H1 (cell line): ENCODE measurements at regions of chr9 and their contacts with region 1.

Region 1: GRCh38 chr9:6827439-6827838 is 69.7 kb downstream of the KDM4C start:
- DNase-seq: peak in 1 of 2 experiments; percentile 63
- H3K4me3 ChIP-seq: no peak overlapping the region
- H3K27ac ChIP-seq: no peak overlapping the region
- H3K4me1 ChIP-seq: no peaks in the 10 kb centered on the region
- H3K27me3 ChIP-seq: no peaks in the 10 kb centered on the region
- CTCF ChIP-seq: peak in 2 of 3 experiments; percentile 62 to 65; a peak in 2 of 4 replicates
- EP300 ChIP-seq: no peak
- POLR2A ChIP-seq: no peak
- RAD21 ChIP-seq: peak; percentile 91

Region 2: GRCh38 chr9:6566409-6567139 is 260.9 kb before region 1 on chr9:
- CTCF ChIA-PET with region 1: no interaction called
- POLR2A ChIA-PET with region 1: no interaction called
- DNase-seq: peak in 1 of 2 experiments; percentile 2
- H3K4me3 ChIP-seq: no peak overlapping the region
- H3K27ac ChIP-seq: no peak overlapping the region
- H3K4me1 ChIP-seq: no peaks in the 10 kb centered on the region
- H3K27me3 ChIP-seq: no peaks in the 10 kb centered on the region
- CTCF ChIP-seq: no peak
- EP300 ChIP-seq: no peak
- POLR2A ChIP-seq: no peak
- RAD21 ChIP-seq: no peak

Region 3: DNA sequence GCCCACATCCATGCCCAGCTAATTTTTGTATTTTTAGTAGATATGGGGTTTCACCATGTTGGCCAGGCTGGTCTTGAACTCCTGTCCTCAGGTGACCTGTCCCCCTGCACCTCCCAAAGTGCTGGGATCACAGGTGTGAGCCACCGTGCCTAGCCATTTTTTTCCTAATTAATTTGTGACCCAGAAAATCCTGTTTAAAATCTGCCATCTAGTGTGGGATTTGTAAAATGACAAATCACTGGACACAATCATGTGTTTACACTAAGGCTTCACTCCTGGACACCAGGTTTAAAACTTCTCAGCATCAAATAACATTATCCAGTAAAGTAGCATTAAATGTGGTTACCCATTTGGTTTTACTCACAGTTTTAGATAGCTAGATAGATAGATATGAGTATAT is 88.2 kb before region 1 on chr9:
- CTCF ChIA-PET with region 1: interaction called, 10 read pairs
- POLR2A ChIA-PET with region 1: no interaction called
- DNase-seq: no peak
- H3K4me3 ChIP-seq: no peak overlapping the region
- H3K27ac ChIP-seq: no peak overlapping the region
- H3K4me1 ChIP-seq: no peaks in the 10 kb centered on the region
- H3K27me3 ChIP-seq: no peaks in the 10 kb centered on the region
- CTCF ChIP-seq: no peak
- EP300 ChIP-seq: no peak
- POLR2A ChIP-seq: no peak
- RAD21 ChIP-seq: peak; percentile 47 to 52

Region 4: GRCh38 chr9:6771722-6772121 is 55.7 kb before region 1 on chr9:
- CTCF ChIA-PET with region 1: no interaction called
- POLR2A ChIA-PET with region 1: no interaction called
- DNase-seq: peak; percentile 69 to 85
- H3K4me3 ChIP-seq: no peak overlapping the region
- H3K27ac ChIP-seq: peak overlapping the region; percentile 9; the same call in 1 of the 2 replicates
- H3K4me1 ChIP-seq: peaks cover 3 to 15% (median 6%) of the 10 kb centered on the region in 4 experiments; a peak in 5 of 7 replicates
- H3K27me3 ChIP-seq: no peaks in the 10 kb centered on the region
- CTCF ChIP-seq: no peak
- EP300 ChIP-seq: peak; percentile 16 to 84; a peak in 2 of 3 replicates
- POLR2A ChIP-seq: no peak
- RAD21 ChIP-seq: no peak; a peak in 1 of 4 replicates

Region 5: GRCh38 chr9:6811436-6811835 is 16.0 kb before region 1 on chr9:
- CTCF ChIA-PET with region 1: interaction called, 13 read pairs
- POLR2A ChIA-PET with region 1: no interaction called
- DNase-seq: no peak
- H3K4me3 ChIP-seq: no peak overlapping the region
- H3K27ac ChIP-seq: no peak overlapping the region
- H3K4me1 ChIP-seq: no peaks in the 10 kb centered on the region
- H3K27me3 ChIP-seq: no peaks in the 10 kb centered on the region
- CTCF ChIP-seq: no peak
- EP300 ChIP-seq: no peak
- POLR2A ChIP-seq: no peak
- RAD21 ChIP-seq: no peak

Region 6: GRCh38 chr9:6845880-6846279 is 18.4 kb after region 1 on chr9:
- CTCF ChIA-PET with region 1: interaction called, 120 read pairs
- POLR2A ChIA-PET with region 1: interaction called, 3 read pairs
- DNase-seq: peak in 1 of 2 experiments; percentile 9
- H3K4me3 ChIP-seq: no peak overlapping the region
- H3K27ac ChIP-seq: no peak overlapping the region
- H3K4me1 ChIP-seq: peaks cover 0 to 6% (median 3%) of the 10 kb centered on the region in 4 experiments; a peak in 3 of 7 replicates
- H3K27me3 ChIP-seq: no peaks in the 10 kb centered on the region
- CTCF ChIP-seq: peak; percentile 53 to 87 (median 56)
- EP300 ChIP-seq: no peak
- POLR2A ChIP-seq: no peak
- RAD21 ChIP-seq: peak; percentile 71 to 74

Region 7: GRCh38 chr9:6873857-6874256 is 46.4 kb after region 1 on chr9:
- CTCF ChIA-PET with region 1: interaction called, 11 read pairs
- POLR2A ChIA-PET with region 1: interaction called, 4 read pairs
- DNase-seq: no peak
- H3K4me3 ChIP-seq: no peak overlapping the region
- H3K27ac ChIP-seq: no peak overlapping the region
- H3K4me1 ChIP-seq: peaks cover 3 to 14% (median 10%) of the 10 kb centered on the region in 4 experiments
- H3K27me3 ChIP-seq: no peaks in the 10 kb centered on the region
- CTCF ChIP-seq: no peak
- EP300 ChIP-seq: no peak
- POLR2A ChIP-seq: no peak
- RAD21 ChIP-seq: no peak

Region 8: GRCh38 chr9:6889868-6890267 is 62.4 kb after region 1 on chr9:
- CTCF ChIA-PET with region 1: interaction called, 12 read pairs
- POLR2A ChIA-PET with region 1: no interaction called
- DNase-seq: no peak
- H3K4me3 ChIP-seq: no peak overlapping the region
- H3K27ac ChIP-seq: no peak overlapping the region
- H3K4me1 ChIP-seq: no peaks in the 10 kb centered on the region
- H3K27me3 ChIP-seq: no peaks in the 10 kb centered on the region
- CTCF ChIP-seq: no peak
- EP300 ChIP-seq: no peak
- POLR2A ChIP-seq: no peak
- RAD21 ChIP-seq: no peak